T-cell (primary cell): ENCODE measurements at regions of chr2 and their contacts with region 1.

Region 1: GRCh38 chr2:214960677-214961076 is 151.2 kb upstream of the BARD1 start:
- DNase-seq: no peak
- ATAC-seq: no peak
- H3K4me3 ChIP-seq: no peak overlapping the region
- H3K4me3 Mint-ChIP-seq: no peak overlapping the region
- H3K27ac ChIP-seq: no peak overlapping the region
- H3K27ac Mint-ChIP-seq: no peak overlapping the region
- H3K4me1 ChIP-seq: no peaks in the 10 kb centered on the region
- H3K4me1 Mint-ChIP-seq: no peaks in the 10 kb centered on the region
- H3K27me3 ChIP-seq: no peaks in the 10 kb centered on the region
- H3K27me3 Mint-ChIP-seq: no peaks in the 10 kb centered on the region

Region 2: DNA sequence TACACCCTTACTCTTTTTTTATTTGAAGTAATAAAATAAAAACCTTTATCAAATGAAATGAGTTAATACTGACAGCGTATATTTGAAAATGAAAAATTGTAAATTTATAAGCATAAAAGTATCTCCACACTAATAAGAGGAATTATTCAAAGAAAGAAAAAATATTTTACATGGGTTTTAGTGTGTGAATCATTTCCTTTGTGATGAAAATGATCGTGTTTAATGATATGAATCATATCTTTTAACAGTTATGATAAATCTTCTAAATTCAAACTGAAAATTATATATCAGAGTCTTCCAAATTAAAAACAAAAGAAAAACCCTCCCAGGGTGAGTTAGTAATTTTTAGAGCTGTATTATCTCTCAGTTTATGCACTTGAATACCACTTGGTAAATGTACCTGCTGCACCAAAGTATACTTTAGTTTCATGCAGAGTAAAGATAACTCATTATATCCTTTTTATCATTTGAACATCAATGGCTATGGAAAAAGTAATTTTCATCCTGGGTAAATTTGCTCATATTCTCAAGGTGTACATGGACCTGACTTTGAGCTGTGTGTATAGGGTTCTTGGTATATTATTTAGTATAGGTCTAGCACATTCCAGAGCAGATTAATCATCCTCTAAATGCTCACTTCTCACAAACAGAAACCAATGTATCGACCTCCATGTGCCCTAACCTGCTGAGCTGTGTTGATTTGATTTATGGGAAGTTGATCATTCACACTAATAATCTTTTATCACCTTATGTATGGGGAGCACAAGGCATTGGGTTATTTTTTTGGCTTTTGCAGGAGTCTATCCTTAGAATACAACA is 648.5 kb before region 1 on chr2:
- CTCF ChIA-PET with region 1: no interaction called
- POLR2A ChIA-PET with region 1: interaction called in 1 of 2 experiments, 10 read pairs
- DNase-seq: no peak
- ATAC-seq: no peak
- H3K4me3 ChIP-seq: no peak overlapping the region
- H3K4me3 Mint-ChIP-seq: no peak overlapping the region
- H3K27ac ChIP-seq: no peak overlapping the region
- H3K27ac Mint-ChIP-seq: no peak overlapping the region
- H3K4me1 ChIP-seq: no peaks in the 10 kb centered on the region
- H3K4me1 Mint-ChIP-seq: no peaks in the 10 kb centered on the region
- H3K27me3 ChIP-seq: no peaks in the 10 kb centered on the region
- H3K27me3 Mint-ChIP-seq: no peaks in the 10 kb centered on the region

Region 3: GRCh38 chr2:214492152-214492551 is 468.5 kb before region 1 on chr2:
- CTCF ChIA-PET with region 1: no interaction called
- POLR2A ChIA-PET with region 1: no interaction called
- DNase-seq: no peak
- ATAC-seq: no peak
- H3K4me3 ChIP-seq: no peak overlapping the region
- H3K4me3 Mint-ChIP-seq: no peak overlapping the region
- H3K27ac ChIP-seq: no peak overlapping the region
- H3K27ac Mint-ChIP-seq: no peak overlapping the region
- H3K4me1 ChIP-seq: no peaks in the 10 kb centered on the region
- H3K4me1 Mint-ChIP-seq: no peaks in the 10 kb centered on the region
- H3K27me3 ChIP-seq: no peaks in the 10 kb centered on the region
- H3K27me3 Mint-ChIP-seq: peaks cover 0 to 4% of the 10 kb centered on the region in 2 donors

Region 4: DNA sequence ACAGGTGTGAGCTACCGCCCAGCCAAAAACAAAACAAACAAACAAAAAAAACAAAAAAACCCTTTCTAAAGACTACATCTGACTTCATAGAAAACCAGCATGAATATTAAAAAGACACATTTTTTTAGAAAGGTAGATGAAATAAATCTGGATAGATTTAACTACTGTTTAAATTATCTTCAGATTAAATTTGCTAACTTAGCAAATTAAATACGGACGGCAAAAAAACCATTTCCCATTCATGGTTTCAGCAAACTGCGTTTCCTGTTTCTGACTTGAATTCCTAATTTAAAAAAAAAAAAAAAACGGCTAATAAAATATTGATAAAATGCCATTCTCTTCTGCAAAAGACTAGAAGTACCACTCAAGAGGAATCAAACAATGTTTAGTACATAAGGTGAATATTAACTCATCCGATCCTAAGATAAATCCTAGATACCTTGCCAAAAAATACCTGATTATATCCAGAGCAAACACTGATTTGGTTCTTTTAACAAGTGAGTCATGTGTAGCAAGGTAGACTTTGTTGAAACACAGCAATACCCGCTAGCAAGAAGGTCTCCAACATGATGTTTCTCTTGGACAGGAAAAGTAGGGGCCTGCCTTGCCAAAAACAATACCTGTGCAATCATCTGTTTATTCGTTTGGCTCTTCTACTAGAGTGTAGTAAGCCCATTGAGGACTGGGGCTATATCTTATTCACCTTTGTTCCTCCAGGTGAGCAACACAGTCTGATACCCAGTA is 247.4 kb before region 1 on chr2:
- CTCF ChIA-PET with region 1: no interaction called
- POLR2A ChIA-PET with region 1: no interaction called
- DNase-seq: no peak
- ATAC-seq: no peak
- H3K4me3 ChIP-seq: no peak overlapping the region
- H3K4me3 Mint-ChIP-seq: no peak overlapping the region
- H3K27ac ChIP-seq: no peak overlapping the region
- H3K27ac Mint-ChIP-seq: no peak overlapping the region
- H3K4me1 ChIP-seq: peaks cover 0 to 5% of the 10 kb centered on the region in 2 experiments
- H3K4me1 Mint-ChIP-seq: peaks cover 6 to 16% (median 6%) of the 10 kb centered on the region in 3 donors
- H3K27me3 ChIP-seq: no peaks in the 10 kb centered on the region
- H3K27me3 Mint-ChIP-seq: no peaks in the 10 kb centered on the region

Region 5: GRCh38 chr2:215049341-215049740 is 88.7 kb after region 1 on chr2:
- CTCF ChIA-PET with region 1: no interaction called
- POLR2A ChIA-PET with region 1: interaction called in 1 of 2 experiments, 19 read pairs
- DNase-seq: no peak
- ATAC-seq: no peak
- H3K4me3 ChIP-seq: no peak overlapping the region
- H3K4me3 Mint-ChIP-seq: no peak overlapping the region
- H3K27ac ChIP-seq: no peak overlapping the region
- H3K27ac Mint-ChIP-seq: no peak overlapping the region
- H3K4me1 ChIP-seq: no peaks in the 10 kb centered on the region
- H3K4me1 Mint-ChIP-seq: no peaks in the 10 kb centered on the region
- H3K27me3 ChIP-seq: no peaks in the 10 kb centered on the region
- H3K27me3 Mint-ChIP-seq: no peaks in the 10 kb centered on the region